Activated T-helper 1 cell treated with anti-CD3 and anti-CD28 coated beads, Interleukin-12 subunit alpha, Interleukin-12 subunit beta, Interleukin-2, Interleukin-4 antibody, amounts not matched to agents 30 ng/mL and 10 ng/mL and 1 ng/mL, durations not matched to agents 14 hours and 24 hours and 36 hours (primary cell): ENCODE measurements at regions of chr13 and their contacts with region 1.

Region 1: GRCh38 chr13:46160471-46161066 is 21.4 kb downstream of the LCP1 start:
- DNase-seq: peak; percentile 45
- H3K4me3 Mint-ChIP-seq: peak overlapping the region; percentile 79
- H3K27ac Mint-ChIP-seq: peak overlapping the region; percentile 89
- H3K4me1 Mint-ChIP-seq: peaks cover 59% of the 10 kb centered on the region
- H3K27me3 Mint-ChIP-seq: no peaks in the 10 kb centered on the region

Region 2: GRCh38 chr13:46126552-46127357 is 33.8 kb before region 1 on chr13:
- intact Hi-C with region 1: loop called (anchors 5 kb)
- DNase-seq: peak; percentile 38
- H3K4me3 Mint-ChIP-seq: no peak overlapping the region
- H3K27ac Mint-ChIP-seq: peak overlapping the region; percentile 19
- H3K4me1 Mint-ChIP-seq: peaks cover 25% of the 10 kb centered on the region
- H3K27me3 Mint-ChIP-seq: peaks cover 2% of the 10 kb centered on the region

Region 3: GRCh38 chr13:46140044-46140443 is 20.5 kb before region 1 on chr13:
- intact Hi-C with region 1: loop called (anchors 2 kb)
- DNase-seq: no peak
- H3K4me3 Mint-ChIP-seq: no peak overlapping the region
- H3K27ac Mint-ChIP-seq: peak overlapping the region; percentile 35
- H3K4me1 Mint-ChIP-seq: peaks cover 23% of the 10 kb centered on the region
- H3K27me3 Mint-ChIP-seq: no peaks in the 10 kb centered on the region

Region 4: DNA sequence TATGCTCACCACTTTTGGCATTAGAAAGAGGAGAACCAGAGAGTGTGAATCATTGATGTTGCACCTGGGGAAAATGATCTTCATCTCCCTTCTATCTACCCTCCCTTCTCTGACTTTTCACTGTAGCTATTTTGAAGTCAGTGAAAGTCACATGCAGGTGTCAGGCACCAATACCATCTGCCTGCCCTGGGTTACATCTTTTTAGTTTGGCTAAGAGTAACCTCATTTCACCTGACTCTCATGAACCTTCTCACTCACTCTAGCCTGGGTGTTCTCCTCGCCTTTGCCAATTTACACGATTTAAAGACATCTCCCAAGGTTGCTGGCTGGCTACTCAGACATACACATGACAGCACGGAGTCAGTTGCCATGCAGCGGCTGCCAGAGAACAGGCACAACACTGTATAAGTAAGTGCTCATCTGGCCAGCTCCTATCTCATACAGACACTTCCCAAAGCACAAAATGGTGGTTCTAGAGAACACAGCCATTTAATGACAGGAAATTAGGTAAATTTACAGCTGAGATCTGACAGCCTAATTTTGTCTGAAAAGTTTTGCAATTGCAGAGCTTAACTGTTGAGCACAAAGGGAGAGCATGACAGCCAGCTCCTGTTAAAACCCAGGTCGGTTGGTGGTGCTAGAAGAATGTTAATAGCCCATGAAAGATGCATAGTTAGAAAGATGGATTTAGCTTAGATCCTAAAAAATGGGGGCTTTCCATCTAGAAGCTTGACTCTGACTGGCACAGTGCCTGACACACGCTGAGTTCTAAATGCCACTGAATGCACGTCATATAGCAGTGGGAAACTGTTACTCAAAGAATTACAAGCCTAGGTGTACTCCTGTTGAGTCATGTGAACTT is 11.1 kb before region 1 on chr13:
- intact Hi-C with region 1: loop called (anchors 1 kb)
- DNase-seq: no peak
- H3K4me3 Mint-ChIP-seq: no peak overlapping the region
- H3K27ac Mint-ChIP-seq: peak overlapping the region; percentile 83
- H3K4me1 Mint-ChIP-seq: peaks cover 45% of the 10 kb centered on the region
- H3K27me3 Mint-ChIP-seq: no peaks in the 10 kb centered on the region

Region 5: DNA sequence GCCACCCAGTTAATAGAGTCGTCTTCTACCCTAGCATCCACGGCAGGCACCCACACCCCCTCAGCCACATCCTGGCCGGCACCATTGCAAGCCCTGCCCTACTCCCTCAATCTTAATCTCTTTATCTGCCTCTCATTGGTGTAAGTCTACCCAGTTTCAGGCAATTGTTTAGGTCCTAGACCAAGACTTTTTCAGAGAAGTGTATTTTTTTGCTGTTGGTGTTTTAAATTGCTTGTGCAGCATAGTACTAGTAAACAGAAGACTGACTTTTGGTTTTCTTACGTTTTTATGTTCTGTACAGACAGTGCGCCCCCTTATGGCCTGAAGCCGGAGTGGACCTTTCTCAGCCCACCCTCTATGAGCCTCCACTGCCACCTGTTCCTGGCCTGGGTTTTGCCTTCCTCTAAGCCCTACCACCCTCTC is 23.7 kb after region 1 on chr13:
- intact Hi-C with region 1: loop called (anchors 1 kb)
- DNase-seq: peak; percentile 64
- H3K4me3 Mint-ChIP-seq: peak overlapping the region; percentile 97
- H3K27ac Mint-ChIP-seq: peak overlapping the region; percentile 99
- H3K4me1 Mint-ChIP-seq: peaks cover 39% of the 10 kb centered on the region
- H3K27me3 Mint-ChIP-seq: no peaks in the 10 kb centered on the region

Region 6: DNA sequence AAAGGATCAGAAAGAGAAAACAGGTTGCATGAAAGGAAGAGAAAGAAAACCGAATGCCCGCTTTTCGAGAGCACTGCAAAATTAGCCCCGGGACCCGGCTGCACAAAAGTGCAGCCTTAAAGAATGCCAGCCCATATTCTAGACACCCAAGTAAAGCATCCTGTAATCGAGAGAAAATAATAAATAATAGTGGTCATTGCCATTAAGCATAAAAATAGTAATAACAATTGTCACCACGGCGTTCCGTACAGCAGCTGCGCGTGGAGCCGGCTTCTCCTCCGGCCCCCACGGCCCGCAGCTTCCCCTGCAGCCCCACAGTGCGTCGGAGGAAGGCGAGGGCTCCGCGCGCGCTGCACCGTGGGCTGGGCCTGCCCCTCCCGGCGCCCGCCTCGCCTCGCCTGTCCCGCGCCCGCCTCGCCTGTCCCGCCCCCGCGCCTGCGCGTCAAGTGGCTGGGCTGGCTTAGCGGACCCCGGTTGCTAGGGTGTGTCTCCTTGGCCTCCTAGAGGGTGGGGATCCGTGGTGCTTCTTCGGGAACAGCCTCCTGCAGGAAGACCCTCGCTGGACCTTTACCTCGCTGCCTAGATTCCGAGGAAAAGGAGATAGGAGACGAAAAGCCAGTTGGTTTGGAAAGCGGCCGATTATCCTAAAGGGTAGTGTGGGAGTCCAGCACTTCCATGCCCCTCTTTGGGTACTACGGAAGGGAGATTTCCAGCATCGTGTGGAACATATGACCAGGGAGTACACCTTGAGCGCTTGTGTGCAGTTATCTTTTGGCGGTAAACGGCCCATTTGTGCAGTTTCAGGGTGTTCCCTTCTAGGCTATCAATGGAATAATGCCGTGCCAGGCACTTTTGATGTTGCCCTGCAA is 51.1 kb after region 1 on chr13 and contains the start of gene LRRC63:
- intact Hi-C with region 1: loop called (anchors 10 kb)
- DNase-seq: peak; percentile 85
- H3K4me3 Mint-ChIP-seq: peak within 1 kb of the TSS; percentile 84
- H3K27ac Mint-ChIP-seq: peak within 1 kb of the TSS; percentile 87
- H3K4me1 Mint-ChIP-seq: peaks cover 26% of the 10 kb centered on the region
- H3K27me3 Mint-ChIP-seq: peaks cover 1% of the 10 kb centered on the region
- total RNA-seq, gene LRRC63: 0.13 and 0.17 TPM in 2 replicates

Region 7: GRCh38 chr13:46288570-46289259 is 128.1 kb after region 1 on chr13:
- intact Hi-C with region 1: loop called (anchors 1 kb)
- DNase-seq: no peak
- H3K4me3 Mint-ChIP-seq: no peak overlapping the region
- H3K27ac Mint-ChIP-seq: no peak overlapping the region
- H3K4me1 Mint-ChIP-seq: peaks cover 26% of the 10 kb centered on the region
- H3K27me3 Mint-ChIP-seq: peaks cover 5% of the 10 kb centered on the region